ENCODE measurements at regions of chr10 and their contacts with region 1.

Region 1: GRCh38 chr10:112314822-112315474 is 31.7 kb downstream of the TECTB start:
- DNase-seq: no peak
- H3K4me3 ChIP-seq: no peak overlapping the region
- CTCF ChIP-seq: peak; percentile 90

Region 2: GRCh38 chr10:112115799-112116385 is 199.1 kb before region 1 on chr10:
- CTCF ChIA-PET with region 1: interaction called, 194 read pairs
- POLR2A ChIA-PET with region 1: no interaction called
- DNase-seq: no peak
- H3K4me3 ChIP-seq: no peak overlapping the region
- CTCF ChIP-seq: peak; percentile 88

Region 3: DNA sequence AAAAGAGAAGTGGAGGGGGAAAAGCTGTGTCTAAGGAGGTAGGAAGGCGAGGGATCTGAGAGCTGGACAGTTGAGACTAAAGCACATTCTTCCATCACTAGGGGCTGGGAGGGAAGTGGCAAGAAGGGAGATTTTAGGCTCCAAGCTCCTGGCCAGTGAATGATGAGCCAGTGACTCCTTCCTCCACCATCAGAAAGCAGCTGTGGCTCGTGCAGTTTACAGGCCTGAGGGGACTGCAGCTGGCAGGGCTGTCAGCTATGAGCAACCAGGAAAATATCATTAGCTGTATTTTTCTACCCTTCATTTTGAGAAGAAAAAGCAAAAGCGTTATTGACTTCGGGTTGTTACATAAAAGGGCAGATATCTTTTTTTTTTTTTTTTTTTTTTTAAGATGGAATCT is 192.1 kb before region 1 on chr10:
- CTCF ChIA-PET with region 1: interaction called, 194 read pairs
- POLR2A ChIA-PET with region 1: no interaction called
- DNase-seq: no peak
- H3K4me3 ChIP-seq: no peak overlapping the region
- CTCF ChIP-seq: no peak

Region 4: DNA sequence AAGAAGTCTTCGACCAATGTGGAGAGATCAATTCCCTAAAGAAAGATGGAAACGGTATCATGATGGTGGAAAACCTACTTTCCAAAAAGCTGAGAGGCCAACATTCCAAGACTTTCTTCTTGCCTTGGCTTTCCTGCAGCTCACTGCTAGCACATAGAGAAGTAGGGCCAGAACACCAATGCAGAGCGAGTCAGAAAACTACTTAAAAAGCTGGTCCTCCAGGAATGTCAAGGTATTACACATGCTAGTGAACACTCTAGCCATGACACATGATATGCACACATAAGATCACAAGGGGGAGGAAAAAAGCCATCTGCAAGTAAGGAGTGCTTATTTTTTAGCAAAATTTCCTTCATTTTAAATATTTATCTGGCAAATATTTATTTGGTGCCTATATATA is 154.1 kb before region 1 on chr10:
- CTCF ChIA-PET with region 1: interaction called, 14 read pairs
- POLR2A ChIA-PET with region 1: no interaction called
- DNase-seq: no peak
- H3K4me3 ChIP-seq: no peak overlapping the region
- CTCF ChIP-seq: no peak

Region 5: GRCh38 chr10:112177247-112177646 is 137.7 kb before region 1 on chr10:
- CTCF ChIA-PET with region 1: interaction called, 68 read pairs
- POLR2A ChIA-PET with region 1: no interaction called
- DNase-seq: peak; percentile 19
- H3K4me3 ChIP-seq: no peak overlapping the region
- CTCF ChIP-seq: no peak

Region 6: GRCh38 chr10:112327678-112328077 is 12.7 kb after region 1 on chr10:
- CTCF ChIA-PET with region 1: interaction called, 10 read pairs
- POLR2A ChIA-PET with region 1: no interaction called
- DNase-seq: no peak
- H3K4me3 ChIP-seq: no peak overlapping the region
- CTCF ChIP-seq: no peak

Region 7: DNA sequence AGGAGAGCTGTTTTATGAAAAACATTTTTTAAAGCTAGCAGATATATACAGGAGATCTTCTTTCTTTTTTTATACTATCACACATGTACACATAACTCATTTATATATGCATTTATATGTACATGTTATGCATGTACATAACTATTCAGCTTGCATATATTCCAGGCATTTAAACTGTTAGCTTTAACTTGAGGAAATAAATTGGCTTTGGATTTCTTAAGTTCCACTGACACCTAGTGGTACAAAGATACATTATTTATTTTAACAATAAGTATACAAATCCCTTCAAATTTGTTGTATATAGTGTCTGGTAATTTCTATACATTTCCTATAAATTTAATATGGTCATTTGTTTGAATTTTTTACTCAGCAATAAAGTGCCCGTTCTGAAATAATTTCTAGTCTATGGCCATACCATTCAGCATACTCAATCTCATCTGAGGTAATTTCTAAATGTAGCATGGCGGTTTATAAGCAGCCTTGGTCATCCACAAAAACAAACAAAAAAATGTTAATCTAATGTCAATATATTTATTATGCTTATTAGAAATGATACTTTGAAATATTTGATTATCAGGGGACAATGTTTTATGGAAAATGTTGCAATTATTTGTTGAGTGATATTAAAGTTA is 120.2 kb after region 1 on chr10:
- CTCF ChIA-PET with region 1: interaction called, 14 read pairs
- POLR2A ChIA-PET with region 1: no interaction called
- DNase-seq: no peak
- H3K4me3 ChIP-seq: no peak overlapping the region
- CTCF ChIP-seq: peak; percentile 11